ENCODE measurements at regions of chr7 and their contacts with region 1.

Region 1: GRCh38 chr7:130010689-130011412 is 40.3 kb downstream of the ZC3HC1 start:
- DNase-seq: peak; percentile 43 to 93 (median 82)

Region 2: GRCh38 chr7:129825496-129826267 is 185.2 kb before region 1 on chr7:
- intact Hi-C with region 1: loop called (anchors 5 kb)
- DNase-seq: peak; percentile 71 to 97 (median 90)

Measured in posterior cingulate gyrus (tissue), 11 donors.